ENCODE measurements at regions of chr4 and their contacts with region 1.

Region 1: DNA sequence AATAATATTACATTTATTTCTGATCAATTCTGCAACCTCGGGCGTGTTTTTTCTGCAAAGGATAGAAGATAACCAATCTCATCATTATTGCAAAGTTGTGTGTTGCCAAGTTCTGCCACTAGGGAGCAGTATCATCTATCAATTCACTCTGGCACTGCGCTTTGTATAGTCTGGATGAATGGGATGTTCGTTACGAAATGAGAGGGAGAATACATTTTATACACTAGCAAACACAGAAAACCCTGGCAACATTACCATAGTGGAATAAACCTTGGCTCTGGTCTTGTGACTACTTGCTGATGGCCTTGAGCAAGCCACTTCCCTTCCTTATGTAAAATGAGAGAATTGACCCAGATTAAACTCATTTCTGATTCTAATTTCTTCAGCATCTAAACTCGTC is 97.5 kb upstream of the ZNF518B start:
- DNase-seq: peak; percentile 39
- H3K4me3 Mint-ChIP-seq: no peak overlapping the region
- H3K27ac Mint-ChIP-seq: no peak overlapping the region
- H3K4me1 Mint-ChIP-seq: peaks cover 8% of the 10 kb centered on the region
- H3K27me3 Mint-ChIP-seq: no peaks in the 10 kb centered on the region
- CTCF ChIP-seq: peak; percentile 39

Region 2: GRCh38 chr4:10157478-10158332 is 397.0 kb before region 1 on chr4:
- CTCF ChIA-PET with region 1: no interaction called
- intact Hi-C with region 1: loop called (anchors 5 kb)
- DNase-seq: peak; percentile 54
- H3K4me3 Mint-ChIP-seq: no peak overlapping the region
- H3K27ac Mint-ChIP-seq: no peak overlapping the region
- H3K4me1 Mint-ChIP-seq: no peaks in the 10 kb centered on the region
- H3K27me3 Mint-ChIP-seq: peaks cover 22% of the 10 kb centered on the region
- CTCF ChIP-seq: peak; percentile 29

Region 3: DNA sequence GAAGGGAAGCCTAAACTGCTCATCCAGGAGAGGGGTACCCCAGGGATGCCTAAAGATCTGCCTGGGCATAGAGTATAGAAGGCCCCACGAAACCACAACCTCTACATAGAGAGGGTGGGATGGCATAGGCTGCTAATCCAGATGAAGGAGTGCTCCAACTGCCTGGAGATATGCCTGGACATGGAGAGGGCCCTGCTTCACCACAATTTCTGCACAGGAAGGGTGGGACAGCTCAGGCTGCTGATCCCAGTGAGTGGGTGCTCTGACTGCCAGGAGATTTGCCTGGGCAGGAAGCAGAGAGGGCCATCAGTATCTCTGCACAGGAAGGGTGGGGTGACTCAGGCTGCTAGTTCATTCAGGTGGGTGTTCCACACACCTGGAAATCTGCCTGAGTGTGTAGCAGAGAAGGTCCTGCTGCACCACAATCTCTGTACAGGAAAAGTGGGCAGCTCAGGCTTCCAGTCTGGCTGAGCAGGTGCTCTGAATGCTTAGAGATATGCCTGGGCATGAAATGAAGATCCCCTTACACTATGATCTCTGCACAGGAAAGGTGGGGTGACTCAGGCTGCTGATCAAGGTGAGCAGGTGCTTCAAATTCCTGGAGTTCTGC is 158.6 kb before region 1 on chr4:
- CTCF ChIA-PET with region 1: no interaction called
- intact Hi-C with region 1: no loop called
- DNase-seq: no peak
- H3K4me3 Mint-ChIP-seq: no peak overlapping the region
- H3K27ac Mint-ChIP-seq: no peak overlapping the region
- H3K4me1 Mint-ChIP-seq: no peaks in the 10 kb centered on the region
- H3K27me3 Mint-ChIP-seq: no peaks in the 10 kb centered on the region
- CTCF ChIP-seq: no peak

Region 4: DNA sequence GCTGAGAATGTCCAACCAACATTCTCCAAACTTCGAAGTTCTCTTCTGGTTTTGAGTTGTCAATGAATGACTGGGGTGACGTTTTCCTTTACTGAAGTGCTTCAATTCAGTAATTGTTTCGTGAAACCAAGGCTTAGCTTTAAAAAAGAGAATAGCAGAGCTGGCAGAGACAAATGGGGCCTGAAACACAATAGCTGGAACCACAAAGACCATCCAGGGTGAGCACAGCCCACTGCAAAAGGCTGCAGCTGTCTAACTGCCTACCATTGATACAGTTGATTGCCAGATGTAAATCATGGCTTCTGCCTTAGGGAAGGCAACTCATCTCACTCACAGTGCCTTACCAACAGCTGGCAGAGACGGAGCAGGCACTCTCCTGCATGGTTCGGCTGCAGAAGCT is 18.8 kb before region 1 on chr4:
- CTCF ChIA-PET with region 1: no interaction called
- intact Hi-C with region 1: no loop called
- DNase-seq: no peak
- H3K4me3 Mint-ChIP-seq: no peak overlapping the region
- H3K27ac Mint-ChIP-seq: no peak overlapping the region
- H3K4me1 Mint-ChIP-seq: no peaks in the 10 kb centered on the region
- H3K27me3 Mint-ChIP-seq: peaks cover 14% of the 10 kb centered on the region
- CTCF ChIP-seq: no peak

Region 5: DNA sequence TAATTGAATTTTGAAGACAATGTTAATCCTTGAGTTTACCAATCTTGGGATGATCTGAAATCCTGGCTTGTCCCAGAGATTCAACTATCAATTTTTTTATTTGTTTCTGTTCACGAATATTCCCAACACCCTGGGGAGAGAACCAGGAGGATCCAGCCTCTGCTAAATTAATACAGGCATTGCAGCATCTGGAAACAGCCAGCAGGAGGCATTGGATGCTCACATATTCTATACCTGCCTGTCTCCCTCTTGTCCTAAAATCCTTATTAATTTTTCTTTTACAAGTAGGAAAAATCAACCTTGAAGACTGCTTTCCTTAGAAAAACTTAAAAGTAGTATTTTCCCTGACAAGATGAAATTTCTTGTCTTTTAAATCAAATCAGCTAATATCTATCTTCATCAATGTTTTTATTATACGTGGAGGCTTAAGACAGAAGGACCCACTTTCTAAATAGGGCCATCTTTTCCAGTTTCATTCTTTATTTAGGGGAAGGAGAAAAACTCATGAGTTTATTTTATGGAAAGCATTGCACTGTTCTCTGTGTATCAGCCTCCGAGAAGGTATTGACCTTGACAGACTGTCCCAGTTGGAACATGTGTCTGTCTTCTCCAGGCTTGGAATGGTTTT is 27.5 kb after region 1 on chr4:
- CTCF ChIA-PET with region 1: no interaction called
- intact Hi-C with region 1: no loop called
- DNase-seq: peak; percentile 4
- H3K4me3 Mint-ChIP-seq: no peak overlapping the region
- H3K27ac Mint-ChIP-seq: no peak overlapping the region
- H3K4me1 Mint-ChIP-seq: no peaks in the 10 kb centered on the region
- H3K27me3 Mint-ChIP-seq: no peaks in the 10 kb centered on the region
- CTCF ChIP-seq: no peak

Region 6: GRCh38 chr4:10593130-10593529 is 38.4 kb after region 1 on chr4:
- CTCF ChIA-PET with region 1: no interaction called
- intact Hi-C with region 1: no loop called
- DNase-seq: no peak
- H3K4me3 Mint-ChIP-seq: no peak overlapping the region
- H3K27ac Mint-ChIP-seq: no peak overlapping the region
- H3K4me1 Mint-ChIP-seq: no peaks in the 10 kb centered on the region
- H3K27me3 Mint-ChIP-seq: peaks cover 11% of the 10 kb centered on the region
- CTCF ChIP-seq: no peak

Measured in Calu3 (cell line).